Mammary epithelial cell (primary cell): ENCODE measurements at regions of chr11 and their contacts with region 1.

Region 1: GRCh38 chr11:66311965-66312548 is 4.8 kb downstream of the CD248 start:
- DNase-seq: peak; percentile 91
- H3K4me3 ChIP-seq: peak overlapping the region; percentile 61 to 63 (median 61)
- H3K27ac ChIP-seq: peak overlapping the region; percentile 54
- H3K4me1 ChIP-seq: peaks cover 4% of the 10 kb centered on the region
- H3K27me3 ChIP-seq: no peaks in the 10 kb centered on the region
- CTCF ChIP-seq: peak in 1 of 2 donors; percentile 98

Region 2: GRCh38 chr11:66268283-66268951 is 43.6 kb before region 1 on chr11 and contains the start of gene RAB1B:
- CTCF ChIA-PET with region 1: no interaction called
- dilution Hi-C with region 1: no loop called
- in situ Hi-C with region 1: no loop called
- intact Hi-C with region 1: no loop called
- DNase-seq: peak; percentile 99
- H3K4me3 ChIP-seq: peak within 1 kb of the TSS; percentile 73 to 91 (median 81)
- H3K27ac ChIP-seq: peak within 1 kb of the TSS; percentile 54
- H3K4me1 ChIP-seq: peaks cover 21% of the 10 kb centered on the region
- H3K27me3 ChIP-seq: no peaks in the 10 kb centered on the region
- CTCF ChIP-seq: no peak
- total RNA-seq, gene RAB1B: 79.5 to 169 TPM

Region 3: GRCh38 chr11:66288671-66289547 is 23.1 kb before region 1 on chr11 and contains the start of gene YIF1A:
- CTCF ChIA-PET with region 1: interaction called, 10 read pairs
- dilution Hi-C with region 1: no loop called
- in situ Hi-C with region 1: no loop called
- intact Hi-C with region 1: loop called (anchors 1 kb)
- DNase-seq: peak; percentile 100
- H3K4me3 ChIP-seq: peak within 1 kb of the TSS; percentile 73 to 75 (median 73)
- H3K27ac ChIP-seq: peak within 1 kb of the TSS; percentile 73
- H3K4me1 ChIP-seq: peaks cover 19% of the 10 kb centered on the region
- H3K27me3 ChIP-seq: peaks cover 6% of the 10 kb centered on the region
- CTCF ChIP-seq: no peak
- total RNA-seq, gene YIF1A: 103 to 125 TPM

Region 4: DNA sequence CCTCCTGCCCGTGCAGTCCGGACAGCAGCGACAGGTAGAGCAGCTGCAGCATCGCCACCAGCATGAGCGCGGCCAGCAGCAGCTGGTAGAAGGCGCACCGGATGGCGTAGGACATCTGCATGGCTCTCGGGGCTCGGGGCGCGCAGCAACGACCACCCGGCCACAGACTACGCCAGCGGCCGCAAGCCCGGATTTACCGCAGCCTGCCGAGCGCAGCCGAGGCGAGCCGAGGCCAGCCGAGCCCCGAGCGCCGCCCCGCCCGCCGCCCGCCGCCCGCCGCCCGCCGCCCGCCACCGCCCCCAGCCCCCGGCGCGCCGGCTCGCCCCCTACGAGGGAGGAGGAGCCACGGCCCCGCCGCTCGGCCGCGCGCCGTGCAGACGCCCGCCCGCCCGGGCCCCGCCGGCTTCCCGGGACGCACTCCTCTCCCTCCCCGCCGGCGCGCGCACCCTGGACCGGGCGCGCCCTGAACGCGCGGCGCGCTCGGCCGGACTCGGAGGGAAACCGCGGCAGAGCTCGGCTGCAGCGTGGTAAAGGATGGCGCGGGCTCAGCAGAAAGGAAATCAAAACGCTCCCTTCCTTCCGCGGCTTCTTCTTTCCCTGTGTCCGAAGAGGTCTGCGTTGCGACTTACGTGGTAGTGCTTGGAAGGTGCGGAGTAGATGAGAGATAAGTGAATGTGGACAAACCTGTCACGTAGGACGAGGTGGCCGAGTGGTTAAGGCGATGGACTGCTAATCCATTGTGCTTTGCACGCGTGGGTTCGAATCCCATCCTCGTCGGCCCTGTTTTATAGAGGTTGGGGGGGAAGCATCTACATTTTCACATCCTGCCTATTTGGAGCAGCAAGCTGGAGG is 35.6 kb after region 1 on chr11 and contains the start of gene B4GAT1:
- CTCF ChIA-PET with region 1: no interaction called
- dilution Hi-C with region 1: no loop called
- in situ Hi-C with region 1: no loop called
- intact Hi-C with region 1: loop called (anchors 1 kb)
- DNase-seq: peak; percentile 88
- H3K4me3 ChIP-seq: peak within 1 kb of the TSS; percentile 67 to 95 (median 91)
- H3K27ac ChIP-seq: peak within 1 kb of the TSS; percentile 30
- H3K4me1 ChIP-seq: peaks cover 42% of the 10 kb centered on the region
- H3K27me3 ChIP-seq: no peaks in the 10 kb centered on the region
- CTCF ChIP-seq: no peak
- total RNA-seq, gene B4GAT1: 10.1 to 15.5 TPM

Region 5: DNA sequence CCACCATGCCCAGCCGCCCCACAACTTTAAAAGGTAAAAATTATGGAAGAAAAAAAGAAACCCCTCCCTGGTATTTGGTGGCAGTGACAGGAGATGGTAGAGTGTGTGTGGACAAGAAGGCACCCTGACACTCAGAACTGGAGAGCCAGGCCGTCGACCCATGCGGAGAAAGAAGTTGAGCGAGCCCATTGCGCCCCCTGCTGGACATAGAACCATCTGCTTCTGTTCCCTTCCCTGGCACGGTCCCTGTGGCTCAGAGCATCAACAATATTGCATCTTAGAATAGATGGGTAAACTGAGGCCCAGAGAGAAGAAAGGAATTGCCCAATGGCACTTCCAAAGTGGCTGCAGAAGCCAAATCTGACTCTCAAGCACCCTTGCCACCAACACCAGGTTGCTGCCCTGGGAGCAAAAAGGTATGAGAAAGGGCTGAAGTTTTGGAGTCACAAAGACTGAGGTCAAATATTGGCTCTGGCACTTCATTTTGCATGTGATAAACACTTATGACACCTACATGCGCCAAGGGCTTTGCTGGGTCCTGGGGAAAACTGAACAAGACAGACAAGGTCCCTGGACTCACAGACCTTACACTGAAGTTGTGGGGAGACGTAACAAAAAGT is 118.0 kb after region 1 on chr11:
- CTCF ChIA-PET with region 1: no interaction called
- dilution Hi-C with region 1: no loop called
- in situ Hi-C with region 1: no loop called
- intact Hi-C with region 1: loop called (anchors 1 kb)
- DNase-seq: peak; percentile 39
- H3K4me3 ChIP-seq: no peak overlapping the region
- H3K27ac ChIP-seq: no peak overlapping the region
- H3K4me1 ChIP-seq: no peaks in the 10 kb centered on the region
- H3K27me3 ChIP-seq: no peaks in the 10 kb centered on the region
- CTCF ChIP-seq: peak; percentile 80 to 89

Region 6: DNA sequence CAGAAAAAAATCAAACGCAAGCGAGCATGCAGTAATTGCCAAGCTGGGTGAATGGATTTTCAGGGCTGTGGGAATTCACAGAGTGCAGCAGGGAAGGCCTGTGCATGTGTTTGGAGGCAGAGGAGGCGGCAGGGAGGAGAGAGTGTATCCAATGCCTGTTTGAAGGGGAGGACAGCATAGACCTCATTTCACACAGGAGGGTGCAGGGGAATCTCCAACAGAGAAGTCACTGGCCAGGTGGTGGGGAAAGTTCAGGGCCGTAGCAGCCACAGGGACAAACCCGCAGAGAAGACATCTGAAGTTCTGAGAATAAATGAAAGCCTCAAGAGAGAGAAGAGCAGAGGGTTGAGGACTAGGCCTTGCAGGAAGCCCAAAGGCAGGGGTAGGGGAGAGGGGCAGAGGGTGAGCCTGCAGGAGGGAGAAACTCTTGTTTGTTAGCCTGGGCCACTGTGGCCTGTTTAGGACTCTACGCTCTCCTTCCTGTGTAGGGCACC is 787.8 kb after region 1 on chr11:
- CTCF ChIA-PET with region 1: interaction called, 28 read pairs
- dilution Hi-C with region 1: no loop called
- in situ Hi-C with region 1: no loop called
- intact Hi-C with region 1: no loop called
- DNase-seq: no peak
- H3K4me3 ChIP-seq: no peak overlapping the region
- H3K27ac ChIP-seq: no peak overlapping the region
- H3K4me1 ChIP-seq: peaks cover 8% of the 10 kb centered on the region
- H3K27me3 ChIP-seq: no peaks in the 10 kb centered on the region
- CTCF ChIP-seq: no peak